ENCODE measurements at regions of chr10 and their contacts with region 1.

Region 1: GRCh38 chr10:5446390-5446926 is 34.1 kb downstream of the NET1 start:
- DNase-seq: peak; percentile 95
- H3K4me3 ChIP-seq: peak overlapping the region; percentile 47 to 89 (median 57)
- H3K27ac ChIP-seq: peak overlapping the region; percentile 50
- H3K4me1 ChIP-seq: peaks cover 35% of the 10 kb centered on the region
- H3K27me3 ChIP-seq: no peaks in the 10 kb centered on the region
- CTCF ChIP-seq: no peak
- POLR2A ChIP-seq: peak; percentile 99

Region 2: GRCh38 chr10:4813023-4813422 is 633.4 kb before region 1 on chr10:
- CTCF ChIA-PET with region 1: interaction called, 12 read pairs
- POLR2A ChIA-PET with region 1: no interaction called
- dilution Hi-C with region 1: no loop called
- intact Hi-C with region 1: no loop called
- DNase-seq: peak; percentile 22
- H3K4me3 ChIP-seq: no peak overlapping the region
- H3K27ac ChIP-seq: no peak overlapping the region
- H3K4me1 ChIP-seq: peaks cover 31% of the 10 kb centered on the region
- H3K27me3 ChIP-seq: peaks cover 0 to 2% of the 10 kb centered on the region in 2 experiments
- CTCF ChIP-seq: no peak
- POLR2A ChIP-seq: no peak

Region 3: DNA sequence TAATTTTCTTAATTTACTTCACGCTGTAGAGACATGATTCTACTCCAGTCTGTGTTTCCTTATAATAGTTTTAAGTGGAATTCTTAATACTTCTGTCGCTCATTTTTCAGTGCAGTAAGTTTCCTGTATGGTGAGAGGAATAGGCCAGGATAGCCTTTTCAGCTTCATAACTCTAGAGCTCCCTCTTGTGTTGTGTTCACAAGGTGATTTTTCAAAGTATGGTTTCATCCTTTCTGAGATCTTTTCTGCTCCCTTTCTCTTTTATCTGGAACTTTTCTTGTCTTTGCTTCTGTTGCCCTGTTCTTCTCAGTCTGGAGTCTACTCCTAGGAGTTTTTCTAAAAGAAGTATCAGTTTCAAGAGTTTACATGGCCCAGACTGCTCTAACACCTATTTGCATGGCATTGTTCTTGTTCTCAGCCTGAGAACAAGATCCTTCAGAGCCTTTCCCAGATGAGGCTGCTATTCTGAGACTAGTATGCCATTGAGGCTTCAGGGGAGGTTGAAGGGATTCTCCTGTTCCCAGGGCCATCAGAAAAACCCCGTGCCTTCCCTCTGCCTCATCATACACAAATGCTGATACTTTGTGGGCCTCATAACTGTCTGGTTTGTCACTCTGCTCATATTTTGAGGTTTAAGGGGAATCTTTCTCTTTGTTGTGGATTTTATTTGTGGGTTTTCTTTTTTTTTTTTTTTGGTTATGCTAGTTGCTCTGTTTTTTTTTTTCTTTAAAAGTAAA is 12.3 kb before region 1 on chr10:
- CTCF ChIA-PET with region 1: interaction called, 21 read pairs
- POLR2A ChIA-PET with region 1: interaction called, 6 read pairs
- dilution Hi-C with region 1: no loop called
- intact Hi-C with region 1: no loop called
- DNase-seq: peak; percentile 67
- H3K4me3 ChIP-seq: no peak overlapping the region
- H3K27ac ChIP-seq: no peak overlapping the region
- H3K4me1 ChIP-seq: no peaks in the 10 kb centered on the region
- H3K27me3 ChIP-seq: no peaks in the 10 kb centered on the region
- CTCF ChIP-seq: peak; percentile 42 to 50
- POLR2A ChIP-seq: no peak

Region 4: GRCh38 chr10:5589715-5590521 is 143.5 kb after region 1 on chr10:
- CTCF ChIA-PET with region 1: interaction called, 4 read pairs
- POLR2A ChIA-PET with region 1: interaction called, 11 read pairs
- dilution Hi-C with region 1: no loop called
- intact Hi-C with region 1: loop called (anchors 10 kb)
- DNase-seq: peak; percentile 65
- H3K4me3 ChIP-seq: no peak overlapping the region
- H3K27ac ChIP-seq: no peak overlapping the region
- H3K4me1 ChIP-seq: peaks cover 20% of the 10 kb centered on the region
- H3K27me3 ChIP-seq: no peaks in the 10 kb centered on the region
- CTCF ChIP-seq: peak; percentile 16 to 40
- POLR2A ChIP-seq: no peak

Region 5: GRCh38 chr10:5623081-5623748 is 176.8 kb after region 1 on chr10:
- CTCF ChIA-PET with region 1: interaction called, 309 read pairs
- POLR2A ChIA-PET with region 1: interaction called, 18 read pairs
- dilution Hi-C with region 1: no loop called
- intact Hi-C with region 1: loop called (anchors 1 kb)
- DNase-seq: peak; percentile 75
- H3K4me3 ChIP-seq: no peak overlapping the region
- H3K27ac ChIP-seq: no peak overlapping the region
- H3K4me1 ChIP-seq: no peaks in the 10 kb centered on the region
- H3K27me3 ChIP-seq: no peaks in the 10 kb centered on the region
- CTCF ChIP-seq: peak; percentile 89 to 94
- POLR2A ChIP-seq: no peak

Region 6: DNA sequence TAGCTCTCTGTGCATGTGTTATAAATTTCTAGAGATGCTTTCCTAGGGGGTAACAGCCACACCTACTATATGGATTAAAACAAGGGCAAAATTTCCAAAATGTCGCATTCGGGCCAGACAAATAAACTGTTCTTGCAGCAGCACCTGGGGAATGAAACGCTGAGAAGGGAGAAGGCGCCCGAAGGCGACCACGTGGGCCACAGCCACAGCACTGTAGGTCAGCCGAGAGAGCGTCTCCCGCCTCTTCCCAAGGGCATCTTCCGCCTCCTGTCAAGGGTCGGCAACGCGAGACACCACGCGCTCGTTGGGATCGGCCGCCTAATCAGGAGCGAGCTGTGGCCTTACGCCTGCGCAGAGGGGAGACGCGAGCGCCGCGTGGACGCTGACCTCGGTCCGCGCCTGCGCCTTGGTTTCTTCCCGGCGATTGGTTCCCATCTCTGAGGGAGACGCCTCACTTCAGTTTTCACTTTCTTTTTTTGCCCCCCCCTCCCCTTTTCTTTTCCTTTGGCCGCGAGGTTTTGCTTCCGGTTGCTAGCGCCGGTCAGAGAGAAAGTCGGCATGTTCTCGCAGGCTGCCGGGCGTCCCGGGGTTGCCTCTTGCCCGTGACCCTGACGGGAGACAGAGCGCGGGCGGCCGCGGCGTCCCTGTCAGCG is 238.0 kb after region 1 on chr10 and contains the start of gene TASOR2:
- CTCF ChIA-PET with region 1: no interaction called
- POLR2A ChIA-PET with region 1: no interaction called
- dilution Hi-C with region 1: no loop called
- intact Hi-C with region 1: loop called (anchors 2 kb)
- DNase-seq: peak; percentile 99
- H3K4me3 ChIP-seq: peak within 1 kb of the TSS; percentile 62 to 97 (median 89)
- H3K27ac ChIP-seq: peak within 1 kb of the TSS; percentile 68
- H3K4me1 ChIP-seq: peaks cover 9% of the 10 kb centered on the region
- H3K27me3 ChIP-seq: peaks cover 6 to 17% of the 10 kb centered on the region in 2 experiments
- CTCF ChIP-seq: no peak
- POLR2A ChIP-seq: peak; percentile 60
- total RNA-seq, gene TASOR2: 48.9 and 49.9 TPM in 2 replicates